ENCODE measurements at regions of chr12 and their contacts with region 1.

Region 1: GRCh38 chr12:27014085-27014858 is at the start of gene TM7SF3:
- DNase-seq: peak; percentile 90 to 96 (median 91)
- ATAC-seq: peak; percentile 88
- H3K4me3 ChIP-seq: peak within 1 kb of the TSS; percentile 88
- H3K27ac ChIP-seq: peak within 1 kb of the TSS; percentile 78
- H3K4me1 ChIP-seq: peaks cover 25 to 34% of the 10 kb centered on the region in 2 experiments
- H3K27me3 ChIP-seq: no peaks in the 10 kb centered on the region
- CTCF ChIP-seq: peak; percentile 96 to 97 (median 96)
- EP300 ChIP-seq: 0 out of 2 replicates have a peak, but pooled peaks have one; percentile 33
- POLR2A ChIP-seq: 0 out of 2 replicates have a peak, but pooled peaks have one; percentile 22
- RAD21 ChIP-seq: peak; percentile 94 to 95
- polyA plus RNA-seq, gene TM7SF3: 9.3 to 9.7 TPM

Region 2: DNA sequence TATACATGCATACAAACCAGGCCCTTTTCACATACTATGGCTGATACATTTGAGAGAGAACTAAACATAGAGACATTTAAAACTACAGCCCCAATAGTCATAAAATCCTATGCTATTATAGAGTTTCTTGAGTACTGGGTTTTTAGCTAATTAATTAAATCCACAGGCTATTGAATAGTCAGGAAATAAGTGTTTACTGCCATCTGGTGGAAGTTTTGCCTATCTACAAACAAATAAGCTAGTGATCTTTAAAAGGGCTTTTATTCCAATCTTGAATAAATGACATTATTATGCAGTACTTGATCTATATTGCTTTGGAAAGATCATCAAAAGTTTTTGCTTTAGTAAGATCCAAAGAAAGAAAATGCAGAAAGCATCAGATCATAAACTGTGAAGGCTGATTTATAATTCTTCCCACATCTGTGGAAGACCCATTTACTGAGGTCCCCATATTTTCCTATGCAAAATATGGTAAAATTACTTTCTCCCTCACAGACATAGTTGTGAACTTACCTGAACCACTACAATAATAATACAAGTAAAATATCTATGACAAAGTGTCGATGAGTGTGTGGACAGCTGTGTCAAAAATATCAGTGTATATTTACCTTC is 312.6 kb before region 1 on chr12:
- CTCF ChIA-PET with region 1: no interaction called
- POLR2A ChIA-PET with region 1: no interaction called
- in situ Hi-C with region 1: no loop called
- intact Hi-C with region 1: loop called (anchors 10 kb)
- DNase-seq: peak in 3 of 4 experiments; percentile 10 to 52 (median 14)
- ATAC-seq: peak; percentile 79
- H3K4me3 ChIP-seq: no peak overlapping the region
- H3K27ac ChIP-seq: no peak overlapping the region
- H3K4me1 ChIP-seq: peaks cover 0 to 7% of the 10 kb centered on the region in 2 experiments; a peak in 3 of 5 replicates
- H3K27me3 ChIP-seq: peaks cover 0 to 3% of the 10 kb centered on the region in 2 experiments; a peak in 2 of 5 replicates
- CTCF ChIP-seq: peak in 2 of 3 experiments; percentile 40 to 77; a peak in 4 of 6 replicates
- EP300 ChIP-seq: no peak
- POLR2A ChIP-seq: no peak
- RAD21 ChIP-seq: peak; percentile 91 to 94

Region 3: DNA sequence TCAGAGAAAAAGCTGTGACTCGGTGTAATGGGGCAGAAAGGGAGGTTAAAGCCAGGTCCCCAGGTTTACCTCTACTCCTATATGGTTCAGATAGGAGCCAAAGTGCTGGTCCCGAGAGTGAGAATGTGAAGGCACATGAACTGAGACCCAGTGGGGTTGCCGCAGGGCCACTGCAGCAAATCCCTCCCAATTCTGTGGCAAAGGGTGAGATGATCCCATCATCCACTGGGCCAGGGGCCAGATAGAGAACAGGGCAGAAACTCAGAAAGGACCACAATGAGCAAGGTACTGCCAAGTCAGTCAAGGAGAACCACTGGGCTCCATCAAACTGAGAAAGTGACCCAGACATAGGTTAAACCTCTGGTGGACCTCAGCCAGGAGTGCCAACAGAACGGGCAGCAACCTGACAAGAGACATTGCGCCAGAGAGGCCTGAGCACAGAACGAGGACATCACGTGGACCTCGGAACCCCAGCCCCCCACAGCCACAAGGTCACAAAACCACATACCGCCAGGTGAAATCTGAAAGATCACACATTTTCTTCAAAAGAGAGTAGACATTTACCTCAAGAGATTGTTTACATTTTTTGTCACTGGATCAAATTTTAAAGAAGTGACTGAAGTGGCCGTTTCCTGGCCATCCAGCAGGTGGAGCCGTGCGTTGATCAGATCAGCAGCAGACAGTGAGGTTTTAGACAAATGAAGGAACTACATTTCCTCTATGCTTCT is 160.8 kb before region 1 on chr12:
- CTCF ChIA-PET with region 1: interaction called, 3 read pairs
- POLR2A ChIA-PET with region 1: no interaction called
- in situ Hi-C with region 1: loop called (anchors 10 kb)
- intact Hi-C with region 1: loop called (anchors 2 kb)
- DNase-seq: peak; percentile 53 to 70 (median 58)
- ATAC-seq: peak; percentile 95
- H3K4me3 ChIP-seq: no peak overlapping the region
- H3K27ac ChIP-seq: no peak overlapping the region
- H3K4me1 ChIP-seq: peaks cover 0 to 6% of the 10 kb centered on the region in 2 experiments; a peak in 2 of 5 replicates
- H3K27me3 ChIP-seq: no peaks in the 10 kb centered on the region; a peak in 2 of 5 replicates
- CTCF ChIP-seq: peak; percentile 83 to 90 (median 88)
- EP300 ChIP-seq: no peak
- POLR2A ChIP-seq: no peak
- RAD21 ChIP-seq: peak; percentile 81 to 88

Region 4: DNA sequence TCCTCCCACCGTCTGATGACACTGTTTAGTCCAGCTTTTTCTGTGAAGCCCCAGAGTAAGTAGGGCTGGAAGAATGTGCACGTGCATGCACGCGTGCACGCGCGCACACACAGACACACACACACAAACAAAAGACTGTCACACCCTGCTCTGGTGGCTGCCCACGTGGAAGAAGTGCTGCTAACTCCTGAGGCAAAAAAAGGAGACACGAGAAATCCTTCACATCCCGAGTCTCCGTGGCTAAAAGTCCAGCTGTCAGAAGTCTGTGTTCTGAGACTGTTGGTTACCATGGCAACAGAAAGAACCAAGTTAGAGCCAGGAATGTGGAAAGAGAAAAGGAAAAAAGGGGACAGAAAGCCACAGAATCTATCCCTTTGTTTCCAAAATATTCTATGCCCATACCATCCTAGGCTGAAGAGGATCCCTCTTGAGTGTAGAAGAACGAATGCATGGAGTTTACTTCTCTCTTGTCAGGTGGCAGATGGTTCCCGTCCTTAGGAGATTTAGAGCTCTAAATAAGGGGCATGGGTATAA is 69.7 kb after region 1 on chr12:
- CTCF ChIA-PET with region 1: no interaction called
- POLR2A ChIA-PET with region 1: no interaction called
- in situ Hi-C with region 1: no loop called
- intact Hi-C with region 1: loop called (anchors 5 kb)
- DNase-seq: no peak
- ATAC-seq: no peak
- H3K4me3 ChIP-seq: no peak overlapping the region
- H3K27ac ChIP-seq: no peak overlapping the region
- H3K4me1 ChIP-seq: no peaks in the 10 kb centered on the region
- H3K27me3 ChIP-seq: no peaks in the 10 kb centered on the region
- CTCF ChIP-seq: no peak
- EP300 ChIP-seq: no peak
- POLR2A ChIP-seq: no peak
- RAD21 ChIP-seq: no peak

Region 5: GRCh38 chr12:27142101-27142721 is 127.9 kb after region 1 on chr12:
- CTCF ChIA-PET with region 1: no interaction called
- POLR2A ChIA-PET with region 1: no interaction called
- in situ Hi-C with region 1: no loop called
- intact Hi-C with region 1: loop called (anchors 1 kb)
- DNase-seq: peak; percentile 54 to 78 (median 61)
- ATAC-seq: peak; percentile 97
- H3K4me3 ChIP-seq: no peak overlapping the region
- H3K27ac ChIP-seq: no peak overlapping the region
- H3K4me1 ChIP-seq: no peaks in the 10 kb centered on the region
- H3K27me3 ChIP-seq: no peaks in the 10 kb centered on the region
- CTCF ChIP-seq: peak; percentile 78 to 83 (median 79)
- EP300 ChIP-seq: no peak
- POLR2A ChIP-seq: no peak
- RAD21 ChIP-seq: peak; percentile 38 to 72

Region 6: DNA sequence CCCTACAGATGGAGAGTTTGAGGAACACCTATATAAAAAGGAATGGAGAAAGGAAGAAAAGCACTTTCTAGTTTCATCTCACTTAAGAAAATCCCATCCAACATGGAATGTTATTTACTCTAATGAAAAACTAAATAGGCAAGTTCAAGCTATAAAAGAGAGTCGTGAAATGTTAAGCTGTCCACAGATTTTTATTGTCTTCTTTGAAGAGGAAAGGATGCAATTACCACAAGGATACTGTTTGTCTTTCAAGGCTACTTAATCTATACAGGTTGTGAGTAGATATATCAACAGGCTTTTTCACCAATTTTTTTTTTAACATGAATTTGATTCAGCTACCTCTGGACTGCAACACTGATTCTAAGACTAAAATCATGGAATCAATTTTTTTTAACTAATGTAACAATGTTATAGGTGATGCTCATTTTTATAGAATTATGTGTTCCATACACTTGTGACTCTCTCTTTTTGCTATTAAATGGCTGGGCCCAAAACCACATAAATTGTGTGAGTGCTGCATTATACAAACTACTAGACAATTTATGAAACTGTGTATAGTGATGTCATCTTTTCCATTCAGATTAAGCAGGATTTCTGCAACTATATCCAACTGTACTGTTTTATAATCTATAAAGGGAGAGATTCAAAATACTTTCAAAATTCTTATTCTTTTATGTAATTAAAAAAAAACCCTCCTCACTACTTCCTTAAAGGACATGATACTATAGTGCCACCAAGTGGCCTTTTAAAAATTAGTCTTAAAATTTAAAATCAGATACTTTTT is 291.6 kb after region 1 on chr12:
- CTCF ChIA-PET with region 1: no interaction called
- POLR2A ChIA-PET with region 1: interaction called, 4 read pairs
- in situ Hi-C with region 1: no loop called
- intact Hi-C with region 1: loop called (anchors 2 kb)
- DNase-seq: peak in 2 of 4 experiments; percentile 10 to 34
- ATAC-seq: no peak
- H3K4me3 ChIP-seq: no peak overlapping the region
- H3K27ac ChIP-seq: no peak overlapping the region
- H3K4me1 ChIP-seq: no peaks in the 10 kb centered on the region; a peak in 1 of 5 replicates
- H3K27me3 ChIP-seq: no peaks in the 10 kb centered on the region
- CTCF ChIP-seq: peak in 2 of 3 experiments; percentile 42 to 64; a peak in 3 of 6 replicates
- EP300 ChIP-seq: no peak
- POLR2A ChIP-seq: no peak
- RAD21 ChIP-seq: peak; percentile 62 to 63

Measured in K562 (cell line).